Left lung (tissue), 14 donors: ENCODE measurements at regions of chr10 and their contacts with region 1.

Region 1: DNA sequence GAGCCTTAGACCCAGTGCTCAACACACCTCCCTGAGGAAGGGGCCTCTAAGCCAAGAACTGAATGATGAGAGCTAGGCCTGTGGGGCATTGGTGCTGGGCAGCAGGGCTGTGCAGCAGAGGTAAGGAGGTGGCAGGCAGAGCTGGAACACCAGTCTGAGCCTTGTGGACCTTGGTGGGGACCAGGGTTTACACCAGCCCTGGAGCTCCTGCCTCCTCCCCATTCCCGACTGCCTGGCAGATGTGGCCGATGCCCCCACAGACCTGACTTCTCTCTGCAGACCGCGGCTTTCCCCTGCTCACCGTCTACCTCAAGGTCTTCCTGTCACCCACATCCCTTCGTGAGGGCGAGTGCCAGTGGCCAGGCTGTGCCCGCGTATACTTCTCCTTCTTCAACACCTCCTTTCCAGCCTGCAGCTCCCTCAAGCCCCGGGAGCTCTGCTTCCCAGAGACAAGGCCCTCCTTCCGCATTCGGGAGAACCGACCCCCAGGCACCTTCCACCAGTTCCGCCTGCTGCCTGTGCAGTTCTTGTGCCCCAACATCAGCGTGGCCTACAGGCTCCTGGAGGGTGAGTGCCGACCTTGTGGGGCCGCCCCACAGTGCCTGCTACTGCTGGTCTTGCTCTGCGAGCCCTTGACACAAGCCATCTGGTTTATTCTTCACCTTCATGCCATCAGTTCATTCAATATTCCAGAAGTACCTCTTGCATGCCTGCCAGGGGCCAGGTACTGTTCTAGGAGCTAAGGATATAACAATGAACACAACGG is 25.4 kb downstream of the RET start:
- DNase-seq: no peak
- ATAC-seq: no peak
- H3K4me3 ChIP-seq: no peak overlapping the region
- H3K27ac ChIP-seq: no peak overlapping the region
- H3K4me1 ChIP-seq: peaks cover 8 to 20% of the 10 kb centered on the region in 2 donors
- H3K27me3 ChIP-seq: peaks cover 12 to 50% of the 10 kb centered on the region in 2 donors
- CTCF ChIP-seq: no peak

Region 2: DNA sequence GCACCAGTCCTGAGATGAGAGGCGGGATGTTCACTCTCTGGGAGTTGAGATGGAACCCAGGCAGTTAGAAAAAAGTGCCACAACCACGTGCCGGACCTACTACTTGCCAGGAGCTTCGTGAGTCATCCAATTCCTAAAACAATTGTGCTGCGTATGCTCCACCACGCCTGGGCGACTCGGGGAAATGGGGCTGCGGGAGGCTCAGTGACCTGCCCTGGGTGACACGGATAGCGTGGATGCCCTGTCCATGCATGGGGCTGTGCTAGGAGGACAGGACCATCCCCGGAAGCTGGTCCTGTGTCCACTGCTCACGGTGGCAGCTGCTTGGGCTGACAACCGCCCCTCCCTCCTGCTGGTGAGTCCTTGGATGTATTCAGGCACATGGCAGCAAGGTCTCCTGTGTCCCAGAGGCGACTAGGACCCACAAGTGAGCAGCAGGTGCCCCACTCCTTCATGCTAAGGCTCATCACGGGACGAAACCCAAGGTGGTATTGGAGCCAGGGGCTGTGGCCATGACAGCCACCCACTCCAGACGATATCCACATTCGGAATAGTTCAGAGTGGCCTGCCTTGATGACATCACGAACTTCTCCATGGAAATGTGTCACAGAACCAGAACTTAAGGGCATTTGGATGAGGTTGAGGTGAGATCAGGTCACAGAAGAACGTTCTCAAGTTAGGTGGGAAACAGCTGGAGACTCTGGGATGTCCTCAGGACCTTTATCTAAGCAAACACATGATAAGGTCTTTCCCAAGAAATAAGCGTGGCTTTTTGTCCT is 229.2 kb before region 1 on chr10:
- intact Hi-C with region 1: loop called in 1 of 2 experiments (anchors 5 kb)
- DNase-seq: peak in 1 of 4 donors; percentile 54
- ATAC-seq: no peak
- H3K4me3 ChIP-seq: no peak overlapping the region
- H3K27ac ChIP-seq: no peak overlapping the region
- H3K4me1 ChIP-seq: peaks cover 0 to 10% of the 10 kb centered on the region in 2 donors
- H3K27me3 ChIP-seq: no peaks in the 10 kb centered on the region
- CTCF ChIP-seq: no peak

Region 3: DNA sequence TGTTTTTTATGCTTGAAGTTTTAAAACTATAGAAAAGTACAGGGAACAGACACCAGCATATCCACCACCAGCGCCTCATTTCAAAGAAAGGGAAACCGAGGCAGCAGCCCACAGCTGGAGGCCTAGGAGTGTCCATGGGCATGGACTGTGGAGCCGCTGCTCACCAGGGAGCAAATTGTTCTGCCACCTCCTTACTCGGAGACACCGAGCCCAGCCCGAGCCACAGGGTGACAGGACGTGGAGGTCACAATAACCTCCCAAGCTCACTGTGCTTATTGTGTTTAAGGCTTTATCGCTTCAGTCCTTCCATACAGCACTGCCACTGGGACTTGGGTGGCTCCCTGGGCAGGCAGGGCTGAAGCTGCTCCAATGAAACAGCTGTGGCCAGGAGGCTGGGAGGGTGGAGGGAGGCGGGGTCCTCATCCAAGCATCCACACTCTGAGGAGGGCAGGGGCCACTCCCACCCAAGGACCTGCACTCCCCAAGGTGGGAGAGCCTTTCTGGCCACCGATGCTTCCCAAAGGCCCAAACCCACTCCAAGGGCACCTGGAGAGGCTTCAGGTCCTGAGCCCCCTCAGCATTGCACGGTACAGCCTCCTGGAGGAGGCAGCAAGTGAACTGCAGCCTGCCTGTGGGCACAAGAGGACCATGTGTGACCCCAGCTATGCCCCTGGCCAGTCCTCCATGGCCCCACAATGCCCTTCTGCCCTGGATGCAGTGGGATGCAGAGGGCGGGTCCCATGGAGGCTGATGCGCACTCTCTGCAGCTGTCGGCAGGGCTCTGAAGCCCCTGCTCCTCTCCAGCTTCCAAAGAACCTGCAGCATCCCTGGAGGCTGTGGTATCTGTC is 64.1 kb before region 1 on chr10:
- intact Hi-C with region 1: no loop called
- DNase-seq: peak in 1 of 4 donors; percentile 64
- ATAC-seq: no peak
- H3K4me3 ChIP-seq: no peak overlapping the region
- H3K27ac ChIP-seq: no peak overlapping the region
- H3K4me1 ChIP-seq: no peaks in the 10 kb centered on the region
- H3K27me3 ChIP-seq: no peaks in the 10 kb centered on the region
- CTCF ChIP-seq: no peak